ENCODE measurements at regions of chr7 and their contacts with region 1.

Region 1: DNA sequence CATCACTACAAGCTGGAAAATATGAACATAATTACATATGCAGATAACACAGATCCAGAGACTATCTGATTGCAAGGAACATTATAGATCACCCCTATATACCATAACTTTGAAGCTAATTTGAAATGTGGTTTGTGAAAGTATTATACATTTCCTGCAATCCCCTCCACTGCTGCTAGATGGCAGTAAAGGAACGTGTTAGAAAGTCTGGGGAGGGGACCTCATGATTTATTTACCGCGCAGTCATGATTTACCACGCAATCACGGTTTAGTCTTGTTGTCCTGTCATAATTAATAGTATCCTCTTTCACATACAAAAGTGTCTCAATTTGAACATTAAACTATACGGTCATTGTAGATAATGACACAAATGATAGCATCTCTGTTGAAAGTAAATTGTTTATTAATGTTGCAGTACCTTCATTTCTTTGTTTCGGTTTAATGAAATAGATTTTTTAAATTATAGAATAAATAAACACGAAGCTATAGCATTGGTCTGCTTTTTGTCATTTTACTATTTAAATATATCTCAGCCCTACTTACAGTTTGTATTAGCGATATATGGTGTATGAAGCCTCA is 145.3 kb upstream of the PRSS1 start:
- DNase-seq: peak; percentile 81
- H3K4me3 ChIP-seq: peak overlapping the region; percentile 6 to 7; a peak in 2 of 4 replicates
- H3K27ac ChIP-seq: no peak overlapping the region
- H3K4me1 ChIP-seq: peaks cover 0 to 5% of the 10 kb centered on the region in 2 experiments; a peak in 2 of 4 replicates
- H3K27me3 ChIP-seq: no peaks in the 10 kb centered on the region
- CTCF ChIP-seq: peak; percentile 99
- EP300 ChIP-seq: no peak
- RAD21 ChIP-seq: peak; percentile 100

Region 2: GRCh38 chr7:142516038-142516501 is 87.9 kb before region 1 on chr7:
- CTCF ChIA-PET with region 1: interaction called, 52 read pairs
- POLR2A ChIA-PET with region 1: no interaction called
- DNase-seq: peak; percentile 69
- H3K4me3 ChIP-seq: peak overlapping the region in 1 of 2 experiments; percentile 20; a peak in 1 of 4 replicates
- H3K27ac ChIP-seq: no peak overlapping the region; a peak in 1 of 4 replicates
- H3K4me1 ChIP-seq: peaks cover 0 to 18% of the 10 kb centered on the region in 2 experiments; a peak in 2 of 4 replicates
- H3K27me3 ChIP-seq: peaks cover 33% of the 10 kb centered on the region
- CTCF ChIP-seq: peak; percentile 96
- EP300 ChIP-seq: no peak
- RAD21 ChIP-seq: peak; percentile 85

Region 3: GRCh38 chr7:142587578-142588191 is 16.3 kb before region 1 on chr7:
- CTCF ChIA-PET with region 1: interaction called, 68 read pairs
- POLR2A ChIA-PET with region 1: no interaction called
- DNase-seq: peak; percentile 31
- H3K4me3 ChIP-seq: no peak overlapping the region; a peak in 1 of 4 replicates
- H3K27ac ChIP-seq: no peak overlapping the region
- H3K4me1 ChIP-seq: peaks cover 0 to 6% of the 10 kb centered on the region in 2 experiments; a peak in 3 of 4 replicates
- H3K27me3 ChIP-seq: no peaks in the 10 kb centered on the region
- CTCF ChIP-seq: peak; percentile 64
- EP300 ChIP-seq: no peak
- RAD21 ChIP-seq: peak; percentile 40; the same call in 1 of the 2 replicates

Region 4: GRCh38 chr7:142646386-142647140 is 42.6 kb after region 1 on chr7:
- CTCF ChIA-PET with region 1: interaction called, 23 read pairs
- POLR2A ChIA-PET with region 1: no interaction called
- DNase-seq: peak; percentile 43
- H3K4me3 ChIP-seq: peak overlapping the region; percentile 2 to 24; a peak in 1 of 4 replicates
- H3K27ac ChIP-seq: peak overlapping the region in 1 of 2 experiments; percentile 98; a peak in 2 of 4 replicates
- H3K4me1 ChIP-seq: peaks cover 0 to 25% of the 10 kb centered on the region in 2 experiments; a peak in 2 of 4 replicates
- H3K27me3 ChIP-seq: peaks cover 15% of the 10 kb centered on the region; the same call in 1 of the 2 replicates
- CTCF ChIP-seq: no peak
- EP300 ChIP-seq: peak in 1 of 2 experiments; percentile 81; a peak in 2 of 4 replicates
- RAD21 ChIP-seq: no peak; the same call in none of the 2 replicates

Region 5: DNA sequence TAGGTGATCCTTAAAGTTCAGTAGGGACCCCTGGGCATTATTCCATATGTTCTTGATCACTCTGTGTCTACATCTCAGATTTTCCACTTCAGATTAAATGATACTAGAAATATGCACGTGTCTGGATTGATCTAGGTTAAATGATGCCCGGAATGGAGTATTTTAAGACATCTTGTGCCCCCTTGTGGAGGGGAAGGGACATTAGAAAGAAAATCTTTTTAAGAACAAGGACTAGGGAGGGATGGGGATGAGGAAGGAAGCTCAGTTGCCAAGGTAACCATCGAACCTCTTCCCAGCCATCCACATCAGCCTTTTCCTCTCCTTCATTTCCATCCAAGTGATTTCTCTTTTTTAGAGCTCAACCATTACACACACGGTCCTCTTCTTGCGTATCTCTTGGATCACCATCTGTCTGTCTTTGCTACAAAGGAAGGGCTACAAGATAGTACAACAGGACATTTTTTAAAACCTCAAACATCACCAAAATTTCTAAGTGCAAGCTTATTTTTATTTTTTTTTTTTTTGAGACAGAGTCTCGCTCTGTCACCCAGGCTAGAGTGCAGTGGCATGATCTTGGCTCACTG is 207.3 kb after region 1 on chr7:
- CTCF ChIA-PET with region 1: interaction called, 67 read pairs
- POLR2A ChIA-PET with region 1: no interaction called
- DNase-seq: peak; percentile 59
- H3K4me3 ChIP-seq: no peak overlapping the region; a peak in 1 of 4 replicates
- H3K27ac ChIP-seq: no peak overlapping the region
- H3K4me1 ChIP-seq: peaks cover 27 to 33% of the 10 kb centered on the region in 2 experiments
- H3K27me3 ChIP-seq: peaks cover 10% of the 10 kb centered on the region; the same call in 1 of the 2 replicates
- CTCF ChIP-seq: peak; percentile 89
- EP300 ChIP-seq: no peak
- RAD21 ChIP-seq: peak; percentile 76

Region 6: GRCh38 chr7:142873281-142873787 is 269.4 kb after region 1 on chr7:
- CTCF ChIA-PET with region 1: interaction called, 38 read pairs
- POLR2A ChIA-PET with region 1: no interaction called
- DNase-seq: peak; percentile 67
- H3K4me3 ChIP-seq: no peak overlapping the region
- H3K27ac ChIP-seq: no peak overlapping the region
- H3K4me1 ChIP-seq: no peaks in the 10 kb centered on the region
- H3K27me3 ChIP-seq: peaks cover 30% of the 10 kb centered on the region; the same call in 1 of the 2 replicates
- CTCF ChIP-seq: peak; percentile 61
- EP300 ChIP-seq: no peak
- RAD21 ChIP-seq: no peak

Region 7: GRCh38 chr7:142890874-142891485 is 287.0 kb after region 1 on chr7:
- CTCF ChIA-PET with region 1: no interaction called
- POLR2A ChIA-PET with region 1: no interaction called
- DNase-seq: no peak
- H3K4me3 ChIP-seq: no peak overlapping the region
- H3K27ac ChIP-seq: no peak overlapping the region
- H3K4me1 ChIP-seq: no peaks in the 10 kb centered on the region
- H3K27me3 ChIP-seq: peaks cover 21% of the 10 kb centered on the region
- CTCF ChIP-seq: no peak
- EP300 ChIP-seq: no peak
- RAD21 ChIP-seq: no peak